ENCODE measurements at regions of chrX and their contacts with region 1.

Region 1: GRCh38 chrX:129931411-129932015 is 25.5 kb downstream of the UTP14A start:
- DNase-seq: peak; percentile 87
- H3K4me3 ChIP-seq: peak overlapping the region; percentile 66
- H3K27ac ChIP-seq: peak overlapping the region; percentile 80
- H3K4me1 ChIP-seq: no peaks in the 10 kb centered on the region
- H3K27me3 ChIP-seq: no peaks in the 10 kb centered on the region
- CTCF ChIP-seq: no peak

Region 2: GRCh38 chrX:129982274-129983251 is 51.0 kb after region 1 on chrX and contains the start of gene BCORL1:
- CTCF ChIA-PET with region 1: no interaction called
- POLR2A ChIA-PET with region 1: no interaction called
- intact Hi-C with region 1: loop called (anchors 10 kb)
- DNase-seq: peak; percentile 95
- H3K4me3 ChIP-seq: no peak within 1 kb of the TSS
- H3K27ac ChIP-seq: no peak within 1 kb of the TSS
- H3K4me1 ChIP-seq: no peaks in the 10 kb centered on the region
- H3K27me3 ChIP-seq: no peaks in the 10 kb centered on the region
- CTCF ChIP-seq: no peak
- total RNA-seq, gene BCORL1: 13.3 and 18.3 TPM in 2 replicates

Measured in A673 (cell line).